SK-N-SH (cell line): ENCODE measurements at regions of chr10 and their contacts with region 1.

Region 1: DNA sequence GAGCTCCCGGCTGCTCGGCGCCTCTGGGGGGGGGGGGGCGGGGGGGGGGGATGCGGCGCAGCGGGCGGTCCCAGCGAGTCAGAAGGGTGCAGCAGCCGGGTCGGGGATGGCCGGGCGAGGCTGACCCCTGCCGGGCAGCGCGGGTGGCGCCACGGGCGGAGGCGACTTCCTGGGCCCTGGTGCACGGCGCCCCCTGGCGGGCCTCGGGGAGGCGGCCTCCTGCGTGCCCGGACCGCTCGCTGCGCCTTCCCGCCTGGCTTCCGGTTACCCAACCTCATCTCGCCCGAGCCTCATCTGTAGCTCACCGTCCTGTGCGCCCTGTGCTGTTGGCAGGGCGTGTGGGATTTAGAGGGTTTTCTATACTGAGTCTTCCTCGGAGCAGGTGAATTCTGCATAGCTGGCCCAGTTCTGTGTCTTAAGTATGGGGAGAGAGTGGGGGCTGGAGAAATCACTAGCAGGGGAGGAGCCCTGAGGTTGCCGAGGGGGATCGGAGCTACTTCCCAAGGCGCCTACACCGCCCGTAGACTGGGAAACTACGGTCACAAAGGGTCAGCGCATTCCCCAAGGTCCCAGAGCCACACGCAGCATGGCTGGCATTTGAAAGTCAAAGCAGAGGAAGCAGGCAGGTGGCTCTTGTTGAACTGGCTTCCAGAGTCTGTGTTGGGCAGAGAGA is 28.3 kb upstream of the WDFY4 start:
- DNase-seq: peak; percentile 97
- H3K4me3 ChIP-seq: peak overlapping the region; percentile 69 to 71
- H3K27ac ChIP-seq: peak overlapping the region; percentile 69 to 74; a peak in 2 of 4 replicates
- H3K4me1 ChIP-seq: peaks cover 5 to 20% of the 10 kb centered on the region in 2 experiments; a peak in 2 of 4 replicates
- H3K27me3 ChIP-seq: no peaks in the 10 kb centered on the region
- CTCF ChIP-seq: peak; percentile 85
- EP300 ChIP-seq: peak in 1 of 2 experiments; percentile 26; a peak in 1 of 4 replicates
- RAD21 ChIP-seq: peak; percentile 93

Region 2: GRCh38 chr10:48353246-48353645 is 303.1 kb before region 1 on chr10:
- CTCF ChIA-PET with region 1: interaction called, 13 read pairs
- POLR2A ChIA-PET with region 1: no interaction called
- DNase-seq: no peak
- H3K4me3 ChIP-seq: no peak overlapping the region
- H3K27ac ChIP-seq: no peak overlapping the region
- H3K4me1 ChIP-seq: no peaks in the 10 kb centered on the region
- H3K27me3 ChIP-seq: no peaks in the 10 kb centered on the region
- CTCF ChIP-seq: no peak
- EP300 ChIP-seq: no peak
- RAD21 ChIP-seq: no peak

Region 3: GRCh38 chr10:48456361-48456804 is 200.0 kb before region 1 on chr10:
- CTCF ChIA-PET with region 1: interaction called, 94 read pairs
- POLR2A ChIA-PET with region 1: no interaction called
- DNase-seq: peak; percentile 82
- H3K4me3 ChIP-seq: no peak overlapping the region
- H3K27ac ChIP-seq: peak overlapping the region in 1 of 2 experiments; percentile 44; a peak in 1 of 4 replicates
- H3K4me1 ChIP-seq: peaks cover 3 to 25% of the 10 kb centered on the region in 2 experiments; a peak in 2 of 4 replicates
- H3K27me3 ChIP-seq: no peaks in the 10 kb centered on the region
- CTCF ChIP-seq: no peak
- EP300 ChIP-seq: no peak
- RAD21 ChIP-seq: no peak

Region 4: GRCh38 chr10:48533951-48534720 is 122.2 kb before region 1 on chr10:
- CTCF ChIA-PET with region 1: interaction called, 120 read pairs
- POLR2A ChIA-PET with region 1: no interaction called
- DNase-seq: no peak
- H3K4me3 ChIP-seq: no peak overlapping the region
- H3K27ac ChIP-seq: no peak overlapping the region
- H3K4me1 ChIP-seq: no peaks in the 10 kb centered on the region; a peak in 1 of 4 replicates
- H3K27me3 ChIP-seq: no peaks in the 10 kb centered on the region
- CTCF ChIP-seq: no peak
- EP300 ChIP-seq: no peak
- RAD21 ChIP-seq: no peak

Region 5: GRCh38 chr10:48608279-48608681 is 48.1 kb before region 1 on chr10:
- CTCF ChIA-PET with region 1: interaction called, 148 read pairs
- POLR2A ChIA-PET with region 1: interaction called, 7 read pairs
- DNase-seq: peak; percentile 67
- H3K4me3 ChIP-seq: no peak overlapping the region
- H3K27ac ChIP-seq: peak overlapping the region in 1 of 2 experiments; percentile 80; a peak in 2 of 4 replicates
- H3K4me1 ChIP-seq: peaks cover 29 to 51% of the 10 kb centered on the region in 2 experiments
- H3K27me3 ChIP-seq: no peaks in the 10 kb centered on the region
- CTCF ChIP-seq: peak; percentile 75
- EP300 ChIP-seq: no peak
- RAD21 ChIP-seq: peak; percentile 65

Region 6: GRCh38 chr10:48748573-48748972 is 92.2 kb after region 1 on chr10:
- CTCF ChIA-PET with region 1: no interaction called
- POLR2A ChIA-PET with region 1: no interaction called
- DNase-seq: no peak
- H3K4me3 ChIP-seq: no peak overlapping the region
- H3K27ac ChIP-seq: no peak overlapping the region
- H3K4me1 ChIP-seq: no peaks in the 10 kb centered on the region
- H3K27me3 ChIP-seq: no peaks in the 10 kb centered on the region
- CTCF ChIP-seq: no peak
- EP300 ChIP-seq: no peak
- RAD21 ChIP-seq: no peak

Region 7: GRCh38 chr10:48821692-48822091 is 165.3 kb after region 1 on chr10:
- CTCF ChIA-PET with region 1: no interaction called
- POLR2A ChIA-PET with region 1: no interaction called
- DNase-seq: no peak
- H3K4me3 ChIP-seq: no peak overlapping the region
- H3K27ac ChIP-seq: no peak overlapping the region
- H3K4me1 ChIP-seq: peaks cover 0 to 2% of the 10 kb centered on the region in 2 experiments; a peak in 1 of 4 replicates
- H3K27me3 ChIP-seq: no peaks in the 10 kb centered on the region
- CTCF ChIP-seq: no peak
- EP300 ChIP-seq: no peak
- RAD21 ChIP-seq: no peak

Region 8: DNA sequence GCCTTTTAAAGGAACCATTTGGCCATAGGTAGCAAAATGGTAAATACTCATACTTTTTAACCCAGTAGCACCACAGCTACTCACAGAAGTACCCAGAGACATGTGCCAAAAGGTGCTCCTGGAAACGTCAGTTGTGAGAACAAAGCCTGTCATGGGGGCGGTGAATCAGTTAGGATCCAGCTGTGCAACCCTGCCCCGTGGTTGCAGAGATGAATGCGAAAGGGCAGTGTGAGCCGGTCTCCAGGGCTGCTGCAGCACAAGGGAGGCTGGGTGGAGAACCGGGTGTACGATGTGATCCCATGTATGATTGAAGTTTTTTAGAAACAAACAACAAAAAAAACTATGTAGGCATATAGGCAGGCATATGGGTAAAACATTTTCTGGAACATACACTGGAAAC is 284.6 kb after region 1 on chr10:
- CTCF ChIA-PET with region 1: interaction called, 10 read pairs
- POLR2A ChIA-PET with region 1: no interaction called
- DNase-seq: no peak
- H3K4me3 ChIP-seq: no peak overlapping the region
- H3K27ac ChIP-seq: no peak overlapping the region
- H3K4me1 ChIP-seq: peaks cover 0 to 6% of the 10 kb centered on the region in 2 experiments; a peak in 1 of 4 replicates
- H3K27me3 ChIP-seq: no peaks in the 10 kb centered on the region
- CTCF ChIP-seq: no peak
- EP300 ChIP-seq: no peak
- RAD21 ChIP-seq: no peak

Region 9: DNA sequence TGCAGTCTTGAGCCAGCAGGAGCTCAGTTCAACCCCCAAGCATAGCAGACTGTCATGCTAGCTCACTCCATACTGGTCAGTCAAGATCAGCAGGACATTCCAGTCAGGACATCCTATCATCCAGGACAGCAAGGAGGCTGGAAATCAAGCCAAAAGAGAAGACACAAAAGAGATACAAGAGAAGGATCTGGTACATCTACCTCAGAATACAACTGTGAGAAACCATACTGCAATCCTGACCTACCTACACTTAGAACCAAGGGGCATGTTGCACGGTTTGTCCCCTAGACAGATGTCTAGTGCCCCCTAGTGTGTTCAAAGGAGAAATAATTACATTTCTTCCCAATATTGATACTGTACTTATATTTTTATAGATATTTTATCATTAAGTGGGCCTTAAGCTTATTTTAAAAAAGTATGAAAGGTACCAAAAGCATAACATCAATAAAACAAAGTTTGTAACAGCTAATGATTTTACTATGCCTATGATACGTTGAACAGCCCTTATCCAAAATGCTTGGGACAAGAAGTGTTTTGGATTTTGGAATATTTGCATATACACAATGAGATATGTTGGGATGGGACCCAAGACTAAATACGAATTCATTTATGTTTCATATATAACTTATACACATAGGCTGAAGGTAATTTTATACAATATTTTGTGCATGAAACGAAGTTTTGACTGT is 855.9 kb after region 1 on chr10:
- CTCF ChIA-PET with region 1: interaction called, 114 read pairs
- POLR2A ChIA-PET with region 1: interaction called, 3 read pairs
- DNase-seq: peak; percentile 38
- H3K4me3 ChIP-seq: no peak overlapping the region
- H3K27ac ChIP-seq: no peak overlapping the region
- H3K4me1 ChIP-seq: no peaks in the 10 kb centered on the region; a peak in 1 of 4 replicates
- H3K27me3 ChIP-seq: no peaks in the 10 kb centered on the region
- CTCF ChIP-seq: peak; percentile 79
- EP300 ChIP-seq: no peak
- RAD21 ChIP-seq: peak; percentile 91